ENCODE measurements at regions of chr18 and their contacts with region 1.

Region 1: GRCh38 chr18:25351777-25352628 is at the start of gene ZNF521:
- DNase-seq: peak; percentile 94
- total RNA-seq, gene ZNF521: 29.0 to 44.5 TPM

Region 2: DNA sequence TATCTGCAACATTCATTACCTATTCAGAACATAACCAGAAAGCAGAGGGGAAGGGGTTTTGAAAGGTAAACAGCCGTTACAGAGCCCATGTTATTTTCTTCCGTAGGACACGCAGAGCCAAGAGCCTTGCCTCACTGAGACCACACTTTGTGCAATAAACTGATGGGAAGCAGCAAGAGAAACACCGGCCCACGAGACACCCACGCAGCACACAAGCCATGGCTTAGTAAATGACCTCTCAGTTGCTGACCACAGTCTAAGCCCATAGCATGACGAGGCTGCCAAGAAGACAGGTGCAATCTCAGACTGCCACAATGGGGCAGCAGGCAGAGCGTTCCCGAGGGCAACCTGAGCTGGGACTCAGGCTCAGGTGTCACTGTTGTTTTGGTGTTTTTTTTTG is 1153.5 kb before region 1 on chr18:
- intact Hi-C with region 1: loop called in 1 of 2 experiments (anchors 5 kb)
- DNase-seq: no peak

Region 3: DNA sequence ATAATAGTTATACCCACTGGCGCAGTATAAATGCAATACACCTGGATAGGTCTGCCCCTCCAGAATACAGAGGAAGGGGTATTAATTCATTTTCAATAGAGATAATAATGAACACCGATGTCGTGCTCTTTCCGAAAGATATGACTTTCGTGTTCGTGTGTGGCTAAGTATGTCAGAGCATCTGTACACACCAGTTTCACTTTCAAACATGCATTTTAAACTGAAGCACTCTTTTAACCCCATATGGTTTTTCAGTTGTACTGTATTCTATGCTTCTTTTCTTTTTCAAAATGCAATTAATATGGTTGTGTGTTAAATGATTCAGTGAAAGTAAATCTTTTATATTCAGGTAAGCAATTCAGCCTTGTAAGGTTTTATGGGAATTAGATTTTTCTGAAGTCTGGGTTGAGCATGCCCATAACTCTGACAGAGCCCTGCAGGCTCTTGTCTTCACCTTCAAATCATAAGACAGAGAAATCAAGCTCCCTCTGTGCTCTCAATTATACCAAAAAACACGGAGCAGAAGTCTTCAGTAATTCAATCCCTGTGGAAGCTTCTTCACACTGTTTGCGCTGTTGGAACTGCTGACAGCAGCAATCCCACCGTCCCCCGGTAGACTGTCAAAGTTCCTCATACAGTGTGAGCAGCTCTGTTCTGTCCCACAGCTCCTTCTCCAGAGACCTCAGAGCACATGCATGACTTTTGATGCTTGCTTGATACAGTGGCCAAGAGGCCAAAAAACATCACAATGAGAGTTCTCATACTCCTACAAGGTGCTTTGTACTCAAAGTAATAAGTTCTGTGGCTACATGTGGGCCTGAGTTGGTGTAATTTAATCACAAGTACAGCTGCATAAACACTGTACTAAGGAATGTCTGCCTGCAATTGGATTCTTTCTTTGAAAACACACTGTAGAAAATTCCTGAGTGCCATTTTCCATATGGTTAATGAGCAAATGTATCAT is 186.9 kb before region 1 on chr18:
- intact Hi-C with region 1: loop called in 1 of 2 experiments (anchors 10 kb)
- DNase-seq: no peak

Region 4: DNA sequence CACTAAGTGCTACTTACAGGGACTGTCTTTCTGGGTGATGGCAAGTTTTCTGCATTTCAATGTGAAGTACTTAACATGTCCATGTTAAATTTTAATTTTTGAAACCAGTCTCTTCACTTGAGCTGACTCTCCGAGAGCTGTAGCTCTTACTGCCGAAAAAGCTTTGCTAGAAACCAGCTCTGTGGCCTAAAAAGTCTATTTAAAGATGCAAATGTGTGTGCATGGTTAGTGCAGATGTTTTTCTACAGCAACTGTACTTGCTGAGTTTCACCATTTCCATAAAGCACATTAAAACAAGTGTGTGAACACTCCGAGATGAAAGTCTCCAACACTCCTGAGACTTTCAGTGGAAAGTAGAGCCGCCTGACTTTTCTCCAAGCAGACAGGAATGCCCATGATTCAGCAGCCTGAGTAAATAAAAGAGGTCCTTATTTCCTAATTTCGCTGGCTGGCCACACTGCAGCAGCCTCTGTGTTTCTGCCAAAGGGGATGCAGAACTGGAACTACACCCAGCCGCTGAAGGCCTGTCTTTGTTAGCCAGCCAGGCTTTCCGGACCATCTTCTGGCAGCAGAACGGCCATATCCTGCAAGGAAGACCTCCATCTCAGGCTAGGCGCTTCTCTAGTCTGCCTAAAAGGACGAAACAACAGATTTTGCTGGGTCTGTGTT is 121.2 kb before region 1 on chr18:
- intact Hi-C with region 1: loop called in 1 of 2 experiments (anchors 5 kb)
- DNase-seq: peak; percentile 89

Region 5: GRCh38 chr18:25289001-25289631 is 62.9 kb before region 1 on chr18:
- intact Hi-C with region 1: loop called in 1 of 2 experiments (anchors 10 kb)
- DNase-seq: no peak